ENCODE measurements at regions of chr2 and their contacts with region 1.

Region 1: GRCh38 chr2:176157499-176158185 is 535 bp downstream of the HOXD3 start:
- DNase-seq: peak; percentile 39
- ATAC-seq: no peak
- H3K4me3 Mint-ChIP-seq: peak overlapping the region; percentile 32
- H3K27ac Mint-ChIP-seq: no peak overlapping the region
- H3K4me1 Mint-ChIP-seq: peaks cover 13% of the 10 kb centered on the region
- H3K27me3 Mint-ChIP-seq: peaks cover 67% of the 10 kb centered on the region

Region 2: DNA sequence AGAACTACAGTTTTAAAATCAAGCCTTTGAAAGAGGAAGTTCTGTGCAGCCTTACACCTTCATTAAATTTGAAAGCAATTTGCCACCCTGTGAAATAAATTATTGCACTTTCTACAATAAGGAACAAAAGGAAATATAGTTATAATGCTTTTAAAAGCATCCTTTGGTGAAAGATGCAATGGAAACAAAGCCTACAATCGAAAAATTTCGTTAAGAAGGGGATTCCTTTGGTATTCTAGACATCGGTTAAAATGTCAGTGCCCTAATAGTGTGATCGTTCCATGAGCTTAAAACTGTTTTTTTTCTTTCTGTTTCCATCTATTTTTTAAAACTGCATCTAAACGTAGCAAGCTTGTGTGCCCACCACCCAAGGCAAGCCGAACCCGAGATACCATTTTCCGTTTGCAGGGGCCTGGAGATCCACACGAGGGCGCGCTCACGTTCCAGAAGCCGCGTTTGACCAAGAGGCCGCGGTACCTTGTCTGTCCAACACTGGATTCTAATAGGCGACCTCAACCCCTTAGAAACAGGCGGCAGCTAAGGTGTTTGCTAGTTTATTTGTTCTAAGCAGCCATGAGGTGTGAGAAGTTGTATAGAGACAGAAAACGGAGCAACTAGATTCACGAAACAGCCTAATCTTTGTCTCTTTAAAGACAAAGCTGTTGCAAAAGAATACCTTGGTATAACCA is 46.5 kb before region 1 on chr2:
- CTCF ChIA-PET with region 1: interaction called, 8 read pairs
- POLR2A ChIA-PET with region 1: no interaction called
- intact Hi-C with region 1: loop called in 1 of 2 experiments (anchors 5 kb)
- DNase-seq: peak; percentile 60
- ATAC-seq: no peak
- H3K4me3 Mint-ChIP-seq: no peak overlapping the region
- H3K27ac Mint-ChIP-seq: no peak overlapping the region
- H3K4me1 Mint-ChIP-seq: peaks cover 13% of the 10 kb centered on the region
- H3K27me3 Mint-ChIP-seq: peaks cover 70% of the 10 kb centered on the region

Measured in activated CD4-positive, alpha-beta T cell treated with anti-CD3 and anti-CD28 coated beads for 36 hours (primary cell).